ENCODE measurements at regions of chr6 and their contacts with region 1.

Region 1: DNA sequence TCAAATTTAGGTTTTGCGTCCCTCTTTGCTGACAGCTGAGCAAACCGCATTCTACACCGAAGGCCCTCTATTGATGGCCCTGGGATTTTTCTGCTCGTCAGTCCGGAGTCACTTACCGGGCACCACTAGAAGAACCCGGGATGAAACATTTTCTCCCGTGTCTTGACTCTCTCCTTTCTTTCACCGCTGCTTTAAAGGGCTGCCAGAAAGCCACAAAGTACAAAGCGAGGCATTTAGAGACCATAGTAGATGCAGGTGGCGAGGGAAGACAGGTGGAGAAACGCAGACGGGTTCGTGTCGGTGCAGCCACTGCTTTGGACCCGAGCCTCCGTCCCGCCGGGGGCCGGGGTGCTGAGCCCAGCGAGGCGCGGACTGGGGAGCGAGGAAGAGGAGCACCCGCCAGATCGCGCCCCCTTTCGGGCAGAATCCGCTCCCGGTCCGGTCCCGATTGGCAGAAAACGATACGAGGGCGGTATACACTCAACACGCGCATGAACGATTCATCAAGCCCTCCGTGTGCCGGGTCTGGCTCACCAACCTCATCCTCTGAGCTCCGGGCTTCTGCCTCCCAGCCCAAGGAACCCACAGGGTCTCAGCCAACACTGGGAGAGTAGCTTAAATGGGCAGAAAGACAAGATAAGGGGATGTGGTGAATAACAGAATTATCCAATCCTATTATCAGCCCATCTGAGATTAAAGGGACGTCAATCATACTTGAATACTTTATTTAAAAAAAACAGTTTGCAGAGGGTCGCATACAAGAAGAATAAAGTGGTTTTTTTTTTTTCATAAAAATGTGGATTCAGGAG is 84.9 kb downstream of the TRIM27 start:
- DNase-seq: peak; percentile 58 to 87 (median 78)
- ATAC-seq: peak; percentile 74 to 86 (median 82)
- H3K4me3 ChIP-seq: peak overlapping the region; percentile 27 to 58 (median 48)
- H3K27ac ChIP-seq: peak overlapping the region in 3 of 4 donors; percentile 29 to 68 (median 53)
- H3K4me1 ChIP-seq: peaks cover 0 to 7% (median 0%) of the 10 kb centered on the region in 3 donors
- H3K27me3 ChIP-seq: peaks cover 0 to 20% (median 3%) of the 10 kb centered on the region in 4 donors
- CTCF ChIP-seq: peak in 3 of 4 donors; percentile 10 to 26 (median 23)

Region 2: DNA sequence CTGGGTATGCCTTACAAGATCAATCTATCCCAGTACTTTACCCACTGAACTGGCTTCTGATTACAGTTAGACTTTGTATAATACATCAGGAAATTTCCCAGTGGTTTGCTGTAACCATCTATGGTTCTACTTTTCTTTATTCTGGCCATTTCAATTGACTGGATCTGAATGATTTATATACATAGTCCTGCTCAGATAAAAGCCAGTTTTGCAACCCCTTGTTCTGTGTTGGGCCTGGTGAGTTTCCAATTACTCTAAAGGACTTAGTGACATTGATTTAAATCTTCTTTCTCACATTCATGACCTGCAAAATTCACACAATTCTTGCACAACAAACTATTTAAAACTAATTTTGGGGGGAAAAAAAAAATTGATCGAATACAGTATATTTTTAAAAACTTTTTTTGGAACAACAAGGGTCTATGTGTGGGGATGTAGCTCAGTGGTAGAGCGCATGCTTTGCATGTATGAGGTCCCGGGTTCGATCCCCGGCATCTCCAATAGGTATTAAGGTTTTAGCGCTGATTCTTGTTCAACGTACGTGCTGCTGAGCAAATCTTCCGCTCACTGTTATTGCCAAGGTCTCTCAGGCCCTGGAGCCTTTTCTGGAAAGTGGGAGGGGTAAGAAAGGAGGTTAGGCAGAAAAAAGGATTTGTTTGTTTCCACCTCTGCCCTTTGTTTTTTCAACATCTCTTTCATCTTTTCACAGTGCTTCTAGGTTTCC is 195.7 kb before region 1 on chr6:
- intact Hi-C with region 1: no loop called
- DNase-seq: no peak
- ATAC-seq: no peak
- H3K4me3 ChIP-seq: no peak overlapping the region
- H3K27ac ChIP-seq: no peak overlapping the region
- H3K4me1 ChIP-seq: no peaks in the 10 kb centered on the region
- H3K27me3 ChIP-seq: peaks cover 0 to 4% (median 0%) of the 10 kb centered on the region in 4 donors
- CTCF ChIP-seq: no peak

Region 3: GRCh38 chr6:29011276-29011734 is 172.5 kb after region 1 on chr6:
- intact Hi-C with region 1: loop called in 2 of 3 experiments (anchors 5 to 10 kb)
- DNase-seq: peak in 2 of 6 donors; percentile 13 to 31
- ATAC-seq: peak in 3 of 4 donors; percentile 68 to 73 (median 70)
- H3K4me3 ChIP-seq: peak overlapping the region in 2 of 4 donors; percentile 7 to 37
- H3K27ac ChIP-seq: no peak overlapping the region
- H3K4me1 ChIP-seq: no peaks in the 10 kb centered on the region
- H3K27me3 ChIP-seq: peaks cover 0 to 21% (median 0%) of the 10 kb centered on the region in 4 donors
- CTCF ChIP-seq: no peak

Region 4: DNA sequence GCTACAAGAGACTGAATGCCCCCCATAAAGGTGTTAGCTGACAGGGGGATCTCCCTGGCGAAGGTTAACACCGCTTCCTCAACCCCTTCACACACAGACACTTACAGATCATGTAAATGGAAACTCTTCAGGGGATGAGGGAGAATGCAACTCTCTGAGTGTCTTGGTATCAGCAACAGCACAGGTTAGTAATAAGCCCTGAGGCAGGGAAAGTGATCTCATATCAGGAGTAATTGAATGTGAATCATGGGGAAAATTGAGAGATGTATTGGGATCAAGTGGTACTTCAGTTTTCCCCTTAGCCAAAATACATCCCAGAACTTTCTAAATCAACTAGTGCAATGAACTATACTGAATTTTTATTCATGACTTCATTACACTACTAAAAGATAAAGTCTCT is 292.9 kb after region 1 on chr6:
- intact Hi-C with region 1: no loop called
- DNase-seq: no peak
- ATAC-seq: no peak
- H3K4me3 ChIP-seq: no peak overlapping the region
- H3K27ac ChIP-seq: no peak overlapping the region
- H3K4me1 ChIP-seq: no peaks in the 10 kb centered on the region
- H3K27me3 ChIP-seq: peaks cover 0 to 4% (median 0%) of the 10 kb centered on the region in 4 donors
- CTCF ChIP-seq: no peak

Measured in pancreas (tissue), 10 donors.